Activated naive CD4-positive, alpha-beta T cell treated with anti-CD3 and anti-CD28 coated beads for 36 hours (primary cell): ENCODE measurements at regions of chr12 and their contacts with region 1.

Region 1: GRCh38 chr12:26937875-26938700 is at the starts of genes FGFR1OP2 and INTS13:
- DNase-seq: peak; percentile 99
- H3K4me3 Mint-ChIP-seq: peak within 1 kb of the TSS; percentile 93
- H3K27ac Mint-ChIP-seq: peak within 1 kb of the TSS; percentile 98
- H3K4me1 Mint-ChIP-seq: peaks cover 52% of the 10 kb centered on the region
- H3K27me3 Mint-ChIP-seq: no peaks in the 10 kb centered on the region
- total RNA-seq, gene FGFR1OP2: 37.0 to 38.4 TPM
- total RNA-seq, gene INTS13: 39.6 to 42.0 TPM

Region 2: DNA sequence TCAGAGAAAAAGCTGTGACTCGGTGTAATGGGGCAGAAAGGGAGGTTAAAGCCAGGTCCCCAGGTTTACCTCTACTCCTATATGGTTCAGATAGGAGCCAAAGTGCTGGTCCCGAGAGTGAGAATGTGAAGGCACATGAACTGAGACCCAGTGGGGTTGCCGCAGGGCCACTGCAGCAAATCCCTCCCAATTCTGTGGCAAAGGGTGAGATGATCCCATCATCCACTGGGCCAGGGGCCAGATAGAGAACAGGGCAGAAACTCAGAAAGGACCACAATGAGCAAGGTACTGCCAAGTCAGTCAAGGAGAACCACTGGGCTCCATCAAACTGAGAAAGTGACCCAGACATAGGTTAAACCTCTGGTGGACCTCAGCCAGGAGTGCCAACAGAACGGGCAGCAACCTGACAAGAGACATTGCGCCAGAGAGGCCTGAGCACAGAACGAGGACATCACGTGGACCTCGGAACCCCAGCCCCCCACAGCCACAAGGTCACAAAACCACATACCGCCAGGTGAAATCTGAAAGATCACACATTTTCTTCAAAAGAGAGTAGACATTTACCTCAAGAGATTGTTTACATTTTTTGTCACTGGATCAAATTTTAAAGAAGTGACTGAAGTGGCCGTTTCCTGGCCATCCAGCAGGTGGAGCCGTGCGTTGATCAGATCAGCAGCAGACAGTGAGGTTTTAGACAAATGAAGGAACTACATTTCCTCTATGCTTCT is 84.6 kb before region 1 on chr12:
- CTCF ChIA-PET with region 1: no interaction called
- intact Hi-C with region 1: loop called (anchors 1 kb)
- DNase-seq: peak; percentile 86
- H3K4me3 Mint-ChIP-seq: no peak overlapping the region
- H3K27ac Mint-ChIP-seq: no peak overlapping the region
- H3K4me1 Mint-ChIP-seq: no peaks in the 10 kb centered on the region
- H3K27me3 Mint-ChIP-seq: peaks cover 3% of the 10 kb centered on the region

Region 3: GRCh38 chr12:26863502-26863901 is 74.6 kb before region 1 on chr12:
- CTCF ChIA-PET with region 1: no interaction called
- intact Hi-C with region 1: no loop called
- DNase-seq: peak; percentile 32
- H3K4me3 Mint-ChIP-seq: no peak overlapping the region
- H3K27ac Mint-ChIP-seq: no peak overlapping the region
- H3K4me1 Mint-ChIP-seq: peaks cover 10% of the 10 kb centered on the region
- H3K27me3 Mint-ChIP-seq: peaks cover 13% of the 10 kb centered on the region

Region 4: GRCh38 chr12:26953447-26953846 is 15.4 kb after region 1 on chr12:
- CTCF ChIA-PET with region 1: interaction called, 6 read pairs
- intact Hi-C with region 1: loop called (anchors 2 kb)
- DNase-seq: no peak
- H3K4me3 Mint-ChIP-seq: no peak overlapping the region
- H3K27ac Mint-ChIP-seq: no peak overlapping the region
- H3K4me1 Mint-ChIP-seq: peaks cover 39% of the 10 kb centered on the region
- H3K27me3 Mint-ChIP-seq: no peaks in the 10 kb centered on the region

Region 5: DNA sequence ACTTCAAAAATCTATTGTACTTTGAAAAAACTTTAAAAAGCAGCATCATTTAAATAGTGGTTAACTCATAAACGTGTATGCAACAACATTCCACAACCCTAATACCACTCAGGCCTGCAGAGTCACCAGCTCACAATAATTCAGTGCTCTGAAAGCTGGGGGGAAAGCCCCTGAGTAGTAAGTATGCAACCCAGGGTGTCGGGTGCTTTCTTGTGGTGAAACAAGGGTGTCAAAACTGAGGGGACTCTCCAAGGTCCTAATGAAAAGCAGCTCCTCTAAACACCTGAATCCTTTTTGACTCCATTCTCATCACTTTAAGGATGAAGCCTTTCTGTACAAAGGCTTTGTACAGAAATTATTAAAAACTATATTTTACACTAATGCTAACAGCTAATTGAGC is 33.9 kb after region 1 on chr12:
- CTCF ChIA-PET with region 1: interaction called, 5 read pairs
- intact Hi-C with region 1: loop called (anchors 1 kb)
- DNase-seq: peak; percentile 92
- H3K4me3 Mint-ChIP-seq: no peak overlapping the region
- H3K27ac Mint-ChIP-seq: no peak overlapping the region
- H3K4me1 Mint-ChIP-seq: peaks cover 9% of the 10 kb centered on the region
- H3K27me3 Mint-ChIP-seq: no peaks in the 10 kb centered on the region

Region 6: GRCh38 chr12:27142101-27142721 is 204.1 kb after region 1 on chr12:
- CTCF ChIA-PET with region 1: no interaction called
- intact Hi-C with region 1: loop called (anchors 2 kb)
- DNase-seq: peak; percentile 61
- H3K4me3 Mint-ChIP-seq: no peak overlapping the region
- H3K27ac Mint-ChIP-seq: no peak overlapping the region
- H3K4me1 Mint-ChIP-seq: peaks cover 10% of the 10 kb centered on the region
- H3K27me3 Mint-ChIP-seq: no peaks in the 10 kb centered on the region

Region 7: GRCh38 chr12:27332407-27333301 is 394.6 kb after region 1 on chr12 and contains the start of gene BMAL2:
- CTCF ChIA-PET with region 1: no interaction called
- intact Hi-C with region 1: loop called (anchors 1 kb)
- DNase-seq: peak; percentile 44
- H3K4me3 Mint-ChIP-seq: peak within 1 kb of the TSS; percentile 90
- H3K27ac Mint-ChIP-seq: peak within 1 kb of the TSS; percentile 74
- H3K4me1 Mint-ChIP-seq: peaks cover 34% of the 10 kb centered on the region
- H3K27me3 Mint-ChIP-seq: peaks cover 30% of the 10 kb centered on the region
- total RNA-seq, gene BMAL2: 7.9 to 9.2 TPM

Region 8: GRCh38 chr12:27710592-27711316 is 772.7 kb after region 1 on chr12 and contains the start of gene MRPS35:
- CTCF ChIA-PET with region 1: no interaction called
- intact Hi-C with region 1: loop called (anchors 1 kb)
- DNase-seq: peak; percentile 95
- H3K4me3 Mint-ChIP-seq: peak within 1 kb of the TSS; percentile 98
- H3K27ac Mint-ChIP-seq: peak within 1 kb of the TSS; percentile 92
- H3K4me1 Mint-ChIP-seq: peaks cover 18% of the 10 kb centered on the region
- H3K27me3 Mint-ChIP-seq: no peaks in the 10 kb centered on the region
- total RNA-seq, gene MRPS35: 53.1 to 57.6 TPM